ENCODE measurements at regions of chr4 and their contacts with region 1.

Region 1: GRCh38 chr4:56307423-56307822 is 79.9 kb downstream of the AASDH start:
- DNase-seq: peak; percentile 29
- ATAC-seq: no peak
- H3K4me3 ChIP-seq: no peak overlapping the region
- H3K27ac ChIP-seq: no peak overlapping the region
- H3K4me1 ChIP-seq: peaks cover 0 to 28% of the 10 kb centered on the region in 2 experiments; a peak in 3 of 4 replicates
- H3K27me3 ChIP-seq: no peaks in the 10 kb centered on the region
- CTCF ChIP-seq: no peak
- POLR2A ChIP-seq: no peak
- RAD21 ChIP-seq: no peak

Region 2: DNA sequence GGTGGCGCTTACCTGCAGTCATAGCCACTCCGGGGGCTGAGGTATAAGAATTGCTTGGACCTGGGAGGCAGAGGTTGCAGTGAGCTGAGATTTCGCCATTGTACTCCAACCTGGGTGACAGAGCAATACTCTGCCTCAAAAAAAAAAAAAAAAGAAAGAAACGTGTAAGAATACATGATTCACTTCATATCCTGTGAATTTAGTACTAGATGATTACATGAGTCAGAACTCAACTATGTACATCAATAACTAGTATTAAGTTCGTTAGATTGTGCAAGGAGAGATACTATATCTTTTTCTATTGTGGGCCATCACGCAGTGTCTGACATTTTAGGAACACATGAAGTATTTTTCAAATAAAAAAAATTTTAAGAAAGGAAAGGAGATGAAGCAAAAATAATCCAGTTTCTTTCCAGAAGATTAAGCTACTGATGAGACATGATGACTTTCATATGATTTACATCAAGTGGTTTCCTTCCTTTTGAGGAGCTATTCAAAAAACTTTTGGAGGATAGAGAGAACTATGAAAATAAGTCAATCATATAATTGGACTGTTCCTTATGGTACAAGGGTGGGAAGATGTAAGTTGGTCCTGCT is 552.6 kb before region 1 on chr4:
- CTCF ChIA-PET with region 1: no interaction called
- POLR2A ChIA-PET with region 1: no interaction called
- RAD21 ChIA-PET with region 1: no interaction called
- intact Hi-C with region 1: no loop called
- DNase-seq: peak; percentile 13
- ATAC-seq: 0 out of 2 replicates have a peak, but pooled peaks have one; percentile 27
- H3K4me3 ChIP-seq: no peak overlapping the region
- H3K27ac ChIP-seq: no peak overlapping the region
- H3K4me1 ChIP-seq: peaks cover 0 to 15% of the 10 kb centered on the region in 2 experiments; a peak in 2 of 4 replicates
- H3K27me3 ChIP-seq: no peaks in the 10 kb centered on the region
- CTCF ChIP-seq: no peak
- POLR2A ChIP-seq: no peak
- RAD21 ChIP-seq: no peak

Region 3: GRCh38 chr4:55808186-55808585 is 499.2 kb before region 1 on chr4:
- CTCF ChIA-PET with region 1: no interaction called
- POLR2A ChIA-PET with region 1: no interaction called
- RAD21 ChIA-PET with region 1: no interaction called
- intact Hi-C with region 1: loop called (anchors 5 kb)
- DNase-seq: no peak
- ATAC-seq: no peak
- H3K4me3 ChIP-seq: no peak overlapping the region
- H3K27ac ChIP-seq: no peak overlapping the region
- H3K4me1 ChIP-seq: no peaks in the 10 kb centered on the region
- H3K27me3 ChIP-seq: no peaks in the 10 kb centered on the region
- CTCF ChIP-seq: no peak
- POLR2A ChIP-seq: no peak
- RAD21 ChIP-seq: no peak